Left lung (tissue), 14 donors: ENCODE measurements at regions of chr9 and their contacts with region 1.

Region 1: DNA sequence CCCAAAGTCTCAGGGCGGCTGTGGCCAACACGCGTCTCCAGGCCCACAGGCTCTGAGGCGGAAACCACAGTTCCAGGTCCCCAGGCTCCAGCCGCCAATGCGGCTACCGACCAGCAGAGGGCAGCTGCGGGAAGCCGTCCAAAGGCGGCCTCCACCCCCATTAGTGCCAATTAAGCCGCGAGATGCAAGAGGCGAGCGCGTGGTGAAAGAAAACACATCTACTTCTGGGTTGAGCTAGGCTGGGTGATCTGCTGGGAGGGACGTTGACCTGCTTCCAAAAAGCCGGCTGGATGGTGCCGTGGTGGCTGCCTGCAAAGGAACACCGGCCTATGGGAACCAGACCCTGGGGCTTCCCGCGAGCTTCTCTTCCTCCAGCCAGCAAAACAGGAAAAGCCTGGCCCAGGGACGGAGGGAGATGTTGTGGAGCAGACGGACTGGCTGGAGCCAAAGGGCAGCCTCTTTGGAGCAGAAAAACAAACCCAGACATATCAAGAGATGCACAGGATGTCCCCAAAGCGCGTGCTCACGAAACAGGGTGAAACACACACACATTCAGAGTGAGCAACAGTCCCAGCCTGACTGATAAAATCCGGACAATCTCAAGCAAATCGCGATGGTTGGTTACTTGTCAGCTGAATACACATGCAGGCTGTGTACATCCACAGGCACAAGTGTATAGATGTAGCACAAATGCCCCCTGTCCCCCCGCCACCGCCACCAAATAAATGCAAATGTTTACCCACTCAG is 187.1 kb upstream of the BRINP1 start:
- DNase-seq: peak; percentile 52 to 90 (median 66)
- ATAC-seq: peak; percentile 99
- H3K4me3 ChIP-seq: peak overlapping the region in 1 of 2 donors; percentile 11
- H3K27ac ChIP-seq: peak overlapping the region; percentile 9 to 38
- H3K4me1 ChIP-seq: peaks cover 0 to 10% of the 10 kb centered on the region in 2 donors
- H3K27me3 ChIP-seq: no peaks in the 10 kb centered on the region
- CTCF ChIP-seq: peak; percentile 84 to 90

Region 2: GRCh38 chr9:119483153-119483552 is 73.1 kb before region 1 on chr9:
- intact Hi-C with region 1: no loop called
- DNase-seq: no peak
- ATAC-seq: peak; percentile 59
- H3K4me3 ChIP-seq: no peak overlapping the region
- H3K27ac ChIP-seq: no peak overlapping the region
- H3K4me1 ChIP-seq: no peaks in the 10 kb centered on the region
- H3K27me3 ChIP-seq: no peaks in the 10 kb centered on the region
- CTCF ChIP-seq: no peak

Region 3: DNA sequence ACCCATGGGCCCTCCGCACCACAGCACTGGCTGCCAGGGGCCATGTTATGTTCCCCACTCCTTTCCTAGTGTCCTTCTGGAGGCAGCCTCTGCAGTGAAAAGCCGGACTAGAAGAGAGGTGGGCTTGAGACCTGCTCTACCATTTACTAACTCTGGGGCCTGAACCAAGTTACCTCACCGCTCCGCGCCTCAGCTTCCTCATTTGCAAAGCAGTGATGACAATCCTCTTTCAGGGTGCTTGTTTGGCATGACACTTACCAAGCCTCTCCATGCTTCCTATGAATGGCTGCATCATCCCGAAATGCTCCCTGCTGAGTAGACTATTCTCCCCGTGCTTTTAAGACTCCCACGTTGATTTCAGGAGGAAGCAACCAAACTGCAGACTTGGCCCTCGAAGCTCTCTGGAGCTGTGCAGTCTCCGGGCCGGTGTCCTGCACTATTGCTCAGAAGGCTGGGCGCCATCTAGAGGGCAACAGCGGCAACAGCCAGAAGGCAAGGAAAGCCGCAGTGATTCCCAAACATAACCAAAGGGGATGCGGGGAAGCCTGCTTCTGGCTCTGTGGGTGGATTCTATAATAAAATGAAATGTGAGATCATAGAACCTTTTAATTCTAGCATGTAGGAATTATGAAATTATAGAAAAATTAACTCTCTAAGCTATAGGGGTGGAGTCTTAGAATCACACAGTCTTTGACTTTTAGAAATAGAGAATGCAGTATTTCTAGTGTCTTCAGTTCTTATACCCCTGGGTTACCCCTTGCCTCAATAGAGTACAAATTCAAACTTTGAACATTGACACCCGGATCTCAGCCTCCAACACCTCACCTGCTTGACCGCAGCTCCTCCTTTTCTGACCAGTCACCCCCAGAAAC is 412.8 kb after region 1 on chr9:
- intact Hi-C with region 1: loop called in 1 of 2 experiments (anchors 10 kb)
- DNase-seq: peak; percentile 26 to 87 (median 67)
- ATAC-seq: peak; percentile 99
- H3K4me3 ChIP-seq: no peak overlapping the region
- H3K27ac ChIP-seq: no peak overlapping the region
- H3K4me1 ChIP-seq: peaks cover 8 to 11% of the 10 kb centered on the region in 2 donors
- H3K27me3 ChIP-seq: no peaks in the 10 kb centered on the region
- CTCF ChIP-seq: peak; percentile 73 to 84